Ovary (tissue), 10 donors: ENCODE measurements at regions of chr19 and their contacts with region 1.

Region 1: DNA sequence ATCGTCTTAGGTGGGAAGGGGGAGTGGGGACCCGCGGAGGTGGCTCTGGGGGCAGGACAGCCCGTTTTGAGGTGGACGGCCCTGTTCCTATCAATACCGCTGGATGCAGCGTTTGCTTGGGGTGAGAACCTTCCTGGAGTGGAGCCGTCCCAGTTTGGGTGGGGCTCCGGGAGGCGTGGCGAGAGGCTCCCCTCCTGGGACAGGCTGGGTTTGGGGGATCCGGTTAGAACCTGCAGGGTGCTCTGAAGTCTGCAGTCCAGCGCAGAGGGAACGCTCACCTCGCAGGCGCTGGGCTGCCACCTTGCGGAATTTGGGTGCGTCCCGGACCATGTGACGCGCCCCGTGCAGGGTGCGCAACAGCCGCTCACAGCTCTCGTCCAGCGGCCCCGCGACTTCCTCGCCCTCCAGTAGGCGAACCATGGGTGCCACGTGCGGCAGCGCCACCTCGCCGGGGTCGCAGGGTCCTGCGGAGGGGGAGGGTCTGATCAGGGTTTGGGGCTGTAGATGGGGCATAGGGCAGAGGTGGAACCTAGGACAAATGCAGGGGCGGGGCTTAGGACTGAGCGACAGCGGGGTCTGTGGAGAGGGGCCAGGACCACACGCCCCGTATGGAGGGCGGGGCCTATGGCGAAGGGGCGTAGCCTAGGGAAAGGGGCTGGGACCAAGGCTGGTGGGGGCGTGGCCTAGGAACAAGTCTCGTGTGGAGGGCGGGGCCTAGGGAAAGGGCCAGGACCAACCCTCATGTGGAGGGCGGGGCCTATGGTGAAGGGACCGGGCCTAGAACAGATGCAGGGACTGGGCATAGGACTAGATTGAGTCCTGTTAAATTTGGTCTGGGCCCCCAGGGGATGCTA is 13.8 kb downstream of the SH2D3A start:
- DNase-seq: peak; percentile 87 to 90 (median 89)
- H3K4me3 ChIP-seq: peak overlapping the region; percentile 13
- H3K27ac ChIP-seq: peak overlapping the region in 1 of 2 donors; percentile 13
- H3K4me1 ChIP-seq: peaks cover 2% of the 10 kb centered on the region
- H3K27me3 ChIP-seq: no peaks in the 10 kb centered on the region
- CTCF ChIP-seq: peak in 2 of 3 donors; percentile 72 to 73
- EP300 ChIP-seq: no peak
- POLR2A ChIP-seq: no peak

Region 2: DNA sequence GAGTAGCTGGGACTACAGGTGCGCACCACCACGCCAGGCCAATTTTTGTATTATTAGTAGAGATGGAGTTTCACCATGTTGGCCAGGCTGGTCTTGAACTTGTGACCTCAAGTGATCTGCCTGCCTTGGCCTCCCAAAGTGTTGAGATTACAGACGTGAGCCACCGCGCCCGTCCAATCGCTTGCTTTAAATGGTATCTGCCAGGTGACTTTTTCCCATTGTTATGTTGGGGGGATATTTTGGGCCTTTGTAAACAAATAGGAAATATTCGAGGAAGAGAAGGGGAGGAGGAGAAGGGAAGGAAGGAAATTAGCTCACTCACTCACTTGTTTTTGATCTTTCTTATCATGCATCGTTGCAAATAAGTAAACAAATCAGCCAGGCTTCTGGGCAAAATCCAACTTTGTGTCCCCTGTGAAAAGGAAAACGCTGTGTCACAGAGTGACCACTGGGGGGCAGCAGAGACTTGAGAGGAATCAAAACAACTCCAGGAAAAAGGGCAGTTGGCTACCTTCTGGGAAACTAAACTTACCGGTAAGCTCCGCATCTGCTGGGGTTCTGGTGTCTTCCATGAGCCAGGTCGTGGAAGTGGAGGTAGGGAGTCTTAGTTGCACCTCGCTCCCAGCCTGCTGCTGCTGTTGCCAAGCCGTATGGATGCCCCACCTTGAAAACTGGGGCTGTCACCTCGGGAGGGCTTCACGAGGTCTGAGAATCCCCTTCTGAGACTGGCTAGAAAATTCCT is 766.2 kb before region 1 on chr19:
- intact Hi-C with region 1: loop called in 1 of 4 experiments (anchors 10 kb)
- DNase-seq: peak; percentile 66 to 83 (median 80)
- H3K4me3 ChIP-seq: peak overlapping the region; percentile 21
- H3K27ac ChIP-seq: no peak overlapping the region
- H3K4me1 ChIP-seq: peaks cover 1% of the 10 kb centered on the region
- H3K27me3 ChIP-seq: no peaks in the 10 kb centered on the region
- CTCF ChIP-seq: peak; percentile 75 to 91 (median 85)
- EP300 ChIP-seq: no peak
- POLR2A ChIP-seq: no peak

Region 3: GRCh38 chr19:6705931-6706632 is 47.3 kb before region 1 on chr19:
- intact Hi-C with region 1: loop called in 1 of 4 experiments (anchors 10 kb)
- DNase-seq: no peak
- H3K4me3 ChIP-seq: no peak overlapping the region
- H3K27ac ChIP-seq: no peak overlapping the region
- H3K4me1 ChIP-seq: no peaks in the 10 kb centered on the region
- H3K27me3 ChIP-seq: no peaks in the 10 kb centered on the region
- CTCF ChIP-seq: no peak
- EP300 ChIP-seq: no peak
- POLR2A ChIP-seq: no peak